Activated naive CD8-positive, alpha-beta T cell treated with anti-CD3 and anti-CD28 coated beads, Interleukin-2, amount 10 ng/mL, durations not matched to agents 7 days and 5 days (primary cell): ENCODE measurements at regions of chr10 and their contacts with region 1.

Region 1: GRCh38 chr10:11236234-11236633 is 218.6 kb downstream of the CELF2 start:
- DNase-seq: no peak
- ATAC-seq: peak; percentile 80
- H3K4me3 Mint-ChIP-seq: peak overlapping the region; percentile 56
- H3K27ac Mint-ChIP-seq: peak overlapping the region; percentile 84
- H3K4me1 Mint-ChIP-seq: peaks cover 71% of the 10 kb centered on the region
- H3K27me3 Mint-ChIP-seq: no peaks in the 10 kb centered on the region

Region 2: GRCh38 chr10:11201911-11202310 is 34.3 kb before region 1 on chr10:
- POLR2A ChIA-PET with region 1: no interaction called
- DNase-seq: no peak
- ATAC-seq: no peak
- H3K4me3 Mint-ChIP-seq: no peak overlapping the region
- H3K27ac Mint-ChIP-seq: peak overlapping the region; percentile 17
- H3K4me1 Mint-ChIP-seq: peaks cover 84% of the 10 kb centered on the region
- H3K27me3 Mint-ChIP-seq: no peaks in the 10 kb centered on the region

Region 3: GRCh38 chr10:11225935-11226334 is 10.3 kb before region 1 on chr10:
- POLR2A ChIA-PET with region 1: interaction called, 16 read pairs
- DNase-seq: no peak
- ATAC-seq: peak; percentile 70
- H3K4me3 Mint-ChIP-seq: peak overlapping the region; percentile 66
- H3K27ac Mint-ChIP-seq: peak overlapping the region; percentile 84
- H3K4me1 Mint-ChIP-seq: peaks cover 75% of the 10 kb centered on the region
- H3K27me3 Mint-ChIP-seq: no peaks in the 10 kb centered on the region

Region 4: GRCh38 chr10:11246752-11247467 is 10.7 kb after region 1 on chr10:
- POLR2A ChIA-PET with region 1: no interaction called
- DNase-seq: no peak
- ATAC-seq: no peak
- H3K4me3 Mint-ChIP-seq: no peak overlapping the region
- H3K27ac Mint-ChIP-seq: no peak overlapping the region
- H3K4me1 Mint-ChIP-seq: peaks cover 19% of the 10 kb centered on the region
- H3K27me3 Mint-ChIP-seq: no peaks in the 10 kb centered on the region